ENCODE measurements at regions of chr1 and their contacts with region 1.

Region 1: GRCh38 chr1:42924082-42924850 is 34.4 kb downstream of the SLC2A1 start:
- DNase-seq: peak; percentile 94
- CTCF ChIP-seq: no peak

Region 2: DNA sequence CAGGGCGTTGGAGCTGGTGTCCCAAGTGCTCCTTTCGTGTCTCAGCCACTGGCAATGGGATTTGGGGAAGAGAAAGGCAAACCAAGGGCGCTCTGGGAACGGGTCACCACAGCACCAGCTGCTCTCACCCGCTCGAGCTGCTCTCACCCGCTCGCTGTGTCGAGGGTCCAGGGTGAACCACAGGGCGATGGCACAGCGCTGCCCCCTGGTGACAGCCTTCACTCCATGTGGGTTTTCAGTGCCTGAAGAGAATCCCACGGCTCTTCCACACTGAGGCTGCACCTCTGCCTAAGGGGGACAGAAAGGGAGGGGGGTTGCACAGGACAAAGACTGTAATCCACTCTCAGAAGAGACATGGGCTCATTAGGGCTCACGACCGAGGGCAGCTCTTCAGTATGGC is 177.1 kb before region 1 on chr1:
- CTCF ChIA-PET with region 1: no interaction called
- POLR2A ChIA-PET with region 1: no interaction called
- DNase-seq: peak; percentile 65
- CTCF ChIP-seq: peak; percentile 59

Region 3: DNA sequence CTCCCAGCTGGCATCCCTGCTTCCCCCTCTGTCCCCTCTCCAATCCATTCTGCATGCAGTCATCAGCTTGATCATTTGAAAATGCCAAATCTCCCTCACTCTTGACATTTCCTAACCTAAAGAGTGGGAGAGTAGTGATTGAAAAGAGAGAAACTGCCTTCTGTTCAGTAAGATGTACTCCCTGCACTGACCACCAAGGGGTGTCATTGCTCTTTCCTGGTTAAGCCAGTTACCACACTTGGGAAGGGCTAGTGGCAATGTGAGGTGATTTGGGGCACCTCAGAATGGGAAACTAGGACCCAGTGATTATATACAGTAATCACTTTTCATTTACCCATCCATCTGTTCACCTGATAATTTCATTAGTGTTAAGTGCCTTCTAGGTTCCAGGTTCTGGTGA is 146.4 kb before region 1 on chr1:
- CTCF ChIA-PET with region 1: interaction called, 14 read pairs
- POLR2A ChIA-PET with region 1: interaction called, 4 read pairs
- DNase-seq: peak; percentile 57
- CTCF ChIP-seq: peak; percentile 63

Region 4: DNA sequence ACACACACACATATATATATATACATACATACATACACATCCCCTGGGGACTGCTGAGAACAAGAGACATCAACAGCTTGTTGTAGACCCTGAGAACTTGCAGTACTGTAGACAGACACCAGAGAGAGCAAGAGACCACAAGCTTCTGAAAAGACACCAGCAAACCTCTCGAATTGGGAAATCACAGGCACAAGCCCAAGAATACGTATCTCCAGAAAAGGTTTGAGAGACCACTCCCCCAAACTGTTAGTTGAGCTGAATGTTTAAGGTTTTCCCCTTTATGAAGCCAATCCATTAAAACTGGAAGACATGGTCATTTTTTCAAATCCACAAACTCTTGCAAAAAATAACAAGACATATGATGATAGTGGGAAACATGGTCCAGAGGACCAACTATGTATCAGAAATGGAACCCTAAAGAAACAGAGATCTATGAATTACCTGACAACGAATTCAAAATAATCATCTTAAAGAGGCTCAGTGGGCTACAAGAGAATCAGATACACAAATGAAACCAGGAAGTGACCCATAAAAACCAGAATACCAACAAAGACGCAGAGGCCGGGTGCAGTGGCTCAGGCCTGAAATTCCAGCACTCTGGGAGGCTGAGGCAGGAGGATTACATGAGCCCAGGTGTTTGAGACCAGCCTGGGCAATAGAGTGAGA is 10.7 kb before region 1 on chr1:
- CTCF ChIA-PET with region 1: interaction called, 47 read pairs
- POLR2A ChIA-PET with region 1: no interaction called
- DNase-seq: peak; percentile 60
- CTCF ChIP-seq: peak; percentile 62

Region 5: DNA sequence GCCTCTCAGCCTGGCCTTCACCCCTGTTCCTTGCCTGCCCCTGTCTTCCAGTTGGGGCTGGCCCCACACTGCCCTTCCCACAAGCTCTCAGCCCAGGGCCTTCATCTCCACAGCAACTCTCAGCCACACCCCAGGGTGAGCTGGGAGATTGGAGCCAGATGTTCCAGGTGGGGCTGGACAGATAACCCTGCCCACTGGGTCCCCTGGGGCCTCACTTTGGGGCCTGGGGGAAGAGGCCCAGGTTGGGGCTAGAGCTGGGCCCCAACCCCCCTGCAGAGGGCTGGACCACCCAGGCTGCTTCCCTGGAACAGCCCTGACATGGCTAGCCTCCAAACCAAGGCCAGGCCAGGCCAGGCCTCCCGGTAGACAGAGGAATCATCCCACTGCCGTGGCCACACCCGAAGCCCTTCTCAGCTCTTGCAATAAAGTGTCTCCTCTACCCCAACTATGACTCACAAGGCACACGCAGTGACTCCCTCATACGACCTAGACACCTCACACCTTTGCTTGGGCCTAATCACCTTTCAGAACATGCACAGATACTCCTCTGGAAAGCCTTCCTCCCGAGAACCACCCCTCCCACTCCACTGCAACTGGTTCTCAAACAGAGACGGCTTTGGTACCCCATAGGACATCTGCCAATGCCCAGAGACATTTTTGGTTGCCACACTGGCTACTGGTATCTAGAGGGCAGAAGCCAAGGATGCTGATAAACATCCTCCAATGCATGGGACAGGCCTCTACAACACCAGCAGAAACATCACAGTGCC is 12.2 kb after region 1 on chr1:
- CTCF ChIA-PET with region 1: interaction called, 21 read pairs
- POLR2A ChIA-PET with region 1: interaction called, 6 read pairs
- DNase-seq: no peak
- CTCF ChIP-seq: no peak

Region 6: GRCh38 chr1:42958488-42959319 is 34.4 kb after region 1 on chr1 and contains the start of gene SLC2A1:
- CTCF ChIA-PET with region 1: interaction called, 11 read pairs
- POLR2A ChIA-PET with region 1: interaction called, 3 read pairs
- DNase-seq: peak; percentile 98
- CTCF ChIP-seq: no peak

Region 7: GRCh38 chr1:43184995-43185394 is 260.7 kb after region 1 on chr1:
- CTCF ChIA-PET with region 1: no interaction called
- POLR2A ChIA-PET with region 1: no interaction called
- DNase-seq: no peak
- CTCF ChIP-seq: no peak

Measured in GM10248 (cell line).